ENCODE measurements at regions of chr12 and their contacts with region 1.

Region 1: DNA sequence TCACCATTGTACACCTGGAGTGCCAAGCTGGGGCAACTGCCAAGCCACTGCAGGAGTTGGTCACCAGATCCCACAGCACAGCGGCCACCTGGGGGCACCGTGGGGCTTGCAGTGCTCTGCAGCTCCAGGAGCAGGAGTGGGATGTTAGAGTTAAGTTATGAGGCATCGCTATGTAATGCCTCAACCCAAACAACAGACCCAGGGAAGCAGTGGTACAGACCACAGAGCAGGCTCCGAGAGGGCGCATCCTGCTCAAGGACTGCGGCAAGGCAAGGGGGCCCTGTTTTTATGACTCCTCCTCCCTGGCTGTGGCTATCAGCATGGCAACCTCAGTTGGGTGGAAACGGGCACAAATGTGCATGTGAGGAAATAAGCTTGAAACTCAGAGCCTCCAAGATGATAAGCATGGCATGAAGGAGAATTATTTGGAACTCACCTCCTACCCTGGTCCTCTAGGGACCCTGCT is 63.1 kb downstream of the ARL6IP4 start:
- DNase-seq: peak; percentile 83
- H3K4me3 ChIP-seq: no peak overlapping the region
- H3K27ac ChIP-seq: no peak overlapping the region
- H3K4me1 ChIP-seq: peaks cover 8% of the 10 kb centered on the region
- H3K27me3 ChIP-seq: no peaks in the 10 kb centered on the region
- CTCF ChIP-seq: peak; percentile 65 to 84

Region 2: DNA sequence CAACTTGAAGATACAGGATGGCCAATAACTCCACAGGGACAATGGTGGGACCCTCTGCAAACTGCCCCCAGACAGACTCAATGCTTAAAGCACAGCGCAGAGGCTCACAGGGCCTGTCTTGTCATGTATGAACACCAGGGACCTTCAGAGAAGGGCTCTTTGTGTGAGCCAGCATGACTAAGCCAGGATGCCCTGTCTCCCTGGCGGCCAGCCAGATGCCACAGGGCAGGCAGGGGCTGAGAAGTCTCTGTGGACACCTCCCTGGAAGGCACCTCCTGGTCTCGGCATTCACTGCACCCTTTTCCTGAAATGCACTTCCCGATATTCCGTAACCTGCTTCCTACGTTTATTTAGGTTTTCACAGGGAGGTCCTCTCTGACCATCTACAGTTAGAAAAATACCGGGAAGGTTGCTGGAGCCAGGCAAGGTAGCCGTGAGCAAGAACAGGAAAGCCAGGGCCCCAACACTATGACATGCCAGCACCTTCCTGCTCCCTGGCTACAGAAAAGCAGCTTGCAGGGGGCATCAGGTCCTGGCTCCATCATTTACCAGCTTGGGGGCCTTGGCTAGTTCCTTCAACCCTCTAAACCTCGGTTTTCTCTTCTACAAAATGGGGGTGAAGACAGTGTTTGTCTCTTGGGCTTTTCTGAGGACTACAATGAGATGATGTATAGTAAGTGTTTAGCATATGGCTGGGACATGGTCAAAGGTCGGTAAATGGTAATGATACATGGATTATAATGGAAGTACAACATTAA is 42.3 kb after region 1 on chr12:
- CTCF ChIA-PET with region 1: no interaction called
- dilution Hi-C with region 1: no loop called
- in situ Hi-C with region 1: no loop called
- intact Hi-C with region 1: loop called (anchors 5 kb)
- DNase-seq: peak; percentile 94
- H3K4me3 ChIP-seq: no peak overlapping the region
- H3K27ac ChIP-seq: peak overlapping the region; percentile 37
- H3K4me1 ChIP-seq: peaks cover 66% of the 10 kb centered on the region
- H3K27me3 ChIP-seq: no peaks in the 10 kb centered on the region
- CTCF ChIP-seq: peak in 1 of 2 donors; percentile 38

Region 3: DNA sequence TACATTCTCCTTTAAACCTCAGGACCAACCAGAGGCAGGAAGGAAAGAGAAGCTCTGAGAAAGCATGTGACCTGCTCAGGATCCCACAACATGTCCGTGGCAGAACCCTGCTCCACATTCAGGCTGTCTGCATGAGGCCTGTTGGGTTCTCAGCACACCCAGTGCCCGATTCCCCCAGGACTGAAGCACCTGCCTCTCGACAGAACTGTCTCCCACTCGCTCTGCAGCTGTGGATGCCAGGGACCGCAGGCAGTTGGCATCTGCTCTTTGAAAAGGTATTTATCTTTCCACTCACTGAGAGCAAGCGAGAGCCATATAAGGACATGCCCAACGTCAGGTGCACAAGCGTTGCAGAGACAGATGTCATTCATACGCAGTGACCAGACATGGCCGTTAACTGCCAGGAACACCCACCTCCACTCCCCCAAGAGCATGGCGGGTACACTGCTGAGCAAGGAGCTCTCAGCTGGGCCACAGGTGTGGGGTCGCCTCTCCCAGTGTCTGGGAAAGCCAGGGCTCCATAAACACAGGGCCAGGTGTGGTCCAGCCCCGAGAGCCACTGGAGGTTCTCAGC is 88.4 kb after region 1 on chr12:
- CTCF ChIA-PET with region 1: interaction called, 9 read pairs
- dilution Hi-C with region 1: no loop called
- in situ Hi-C with region 1: no loop called
- intact Hi-C with region 1: loop called (anchors 5 kb)
- DNase-seq: peak; percentile 46
- H3K4me3 ChIP-seq: no peak overlapping the region
- H3K27ac ChIP-seq: peak overlapping the region; percentile 88
- H3K4me1 ChIP-seq: peaks cover 69% of the 10 kb centered on the region
- H3K27me3 ChIP-seq: no peaks in the 10 kb centered on the region
- CTCF ChIP-seq: no peak

Region 4: GRCh38 chr12:123150744-123151456 is 107.3 kb after region 1 on chr12 and contains the start of gene PITPNM2:
- CTCF ChIA-PET with region 1: interaction called, 5 read pairs
- dilution Hi-C with region 1: no loop called
- in situ Hi-C with region 1: no loop called
- intact Hi-C with region 1: loop called (anchors 1 kb)
- DNase-seq: peak; percentile 57
- H3K4me3 ChIP-seq: peak within 1 kb of the TSS; percentile 79 to 80 (median 79)
- H3K27ac ChIP-seq: peak within 1 kb of the TSS; percentile 62
- H3K4me1 ChIP-seq: peaks cover 18% of the 10 kb centered on the region
- H3K27me3 ChIP-seq: no peaks in the 10 kb centered on the region
- CTCF ChIP-seq: no peak
- total RNA-seq, gene PITPNM2: 7.5 to 14.9 TPM

Region 5: GRCh38 chr12:123293178-123293760 is 249.7 kb after region 1 on chr12:
- CTCF ChIA-PET with region 1: no interaction called
- dilution Hi-C with region 1: no loop called
- in situ Hi-C with region 1: no loop called
- intact Hi-C with region 1: no loop called
- DNase-seq: no peak
- H3K4me3 ChIP-seq: no peak overlapping the region
- H3K27ac ChIP-seq: no peak overlapping the region
- H3K4me1 ChIP-seq: no peaks in the 10 kb centered on the region
- H3K27me3 ChIP-seq: no peaks in the 10 kb centered on the region
- CTCF ChIP-seq: no peak